ENCODE measurements at regions of chr2 and their contacts with region 1.

Region 1: DNA sequence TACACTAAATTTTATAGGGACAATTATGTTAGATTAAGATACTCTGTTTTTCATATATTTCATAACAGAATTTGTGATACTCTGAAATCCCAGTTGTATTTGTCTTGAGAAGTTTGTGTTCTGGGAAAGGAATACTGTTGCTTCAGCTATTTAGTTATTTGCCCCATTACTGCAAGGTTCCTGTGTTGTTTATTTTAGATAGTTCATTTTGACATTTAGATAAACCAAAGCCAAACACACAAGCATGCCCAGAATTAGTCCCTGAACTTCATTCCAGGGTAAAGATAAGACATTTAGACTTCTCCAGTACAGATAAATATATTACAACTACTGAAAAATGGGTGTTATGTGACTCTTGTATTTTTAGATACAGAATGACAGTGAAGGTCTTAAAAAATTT is 74.7 kb downstream of the BMPR2 start:
- DNase-seq: no peak

Region 2: GRCh38 chr2:202039278-202040078 is 411.3 kb before region 1 on chr2:
- intact Hi-C with region 1: no loop called
- DNase-seq: no peak

Region 3: GRCh38 chr2:202387608-202388342 is 63.0 kb before region 1 on chr2:
- intact Hi-C with region 1: loop called in 1 of 2 experiments (anchors 10 kb)
- DNase-seq: no peak

Region 4: DNA sequence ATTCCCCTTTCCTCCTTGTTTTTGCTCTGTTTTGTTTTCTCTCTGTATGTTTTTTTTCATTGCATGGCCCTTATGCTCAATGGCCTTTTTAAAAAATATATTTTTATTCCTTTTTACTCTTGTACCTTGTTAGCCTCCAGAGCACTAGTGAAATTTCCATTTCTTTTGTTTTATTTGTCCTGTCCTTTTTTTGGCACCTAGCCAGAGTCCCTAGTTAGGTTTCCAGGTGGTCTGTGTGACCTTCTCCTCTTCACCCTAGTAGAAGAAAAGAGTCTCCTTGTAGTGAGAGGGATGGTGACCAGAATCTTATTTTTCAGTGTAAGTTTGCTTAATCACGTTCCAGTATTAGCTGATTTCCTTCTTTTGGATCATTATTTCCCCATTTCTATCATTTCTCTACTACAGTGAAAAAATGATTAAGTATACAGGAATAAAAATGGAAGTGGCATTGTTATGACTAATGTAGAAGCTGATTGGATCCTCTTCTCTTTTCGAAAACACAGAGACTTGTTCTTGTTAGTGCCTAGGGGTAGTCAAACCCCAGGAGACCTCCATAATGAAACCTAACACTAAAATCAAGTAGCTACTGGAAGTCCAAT is 629.8 kb after region 1 on chr2:
- intact Hi-C with region 1: loop called in 1 of 2 experiments (anchors 5 kb)
- DNase-seq: no peak